Right cardiac atrium (tissue), 5 donors: ENCODE measurements at regions of chr5 and their contacts with region 1.

Region 1: DNA sequence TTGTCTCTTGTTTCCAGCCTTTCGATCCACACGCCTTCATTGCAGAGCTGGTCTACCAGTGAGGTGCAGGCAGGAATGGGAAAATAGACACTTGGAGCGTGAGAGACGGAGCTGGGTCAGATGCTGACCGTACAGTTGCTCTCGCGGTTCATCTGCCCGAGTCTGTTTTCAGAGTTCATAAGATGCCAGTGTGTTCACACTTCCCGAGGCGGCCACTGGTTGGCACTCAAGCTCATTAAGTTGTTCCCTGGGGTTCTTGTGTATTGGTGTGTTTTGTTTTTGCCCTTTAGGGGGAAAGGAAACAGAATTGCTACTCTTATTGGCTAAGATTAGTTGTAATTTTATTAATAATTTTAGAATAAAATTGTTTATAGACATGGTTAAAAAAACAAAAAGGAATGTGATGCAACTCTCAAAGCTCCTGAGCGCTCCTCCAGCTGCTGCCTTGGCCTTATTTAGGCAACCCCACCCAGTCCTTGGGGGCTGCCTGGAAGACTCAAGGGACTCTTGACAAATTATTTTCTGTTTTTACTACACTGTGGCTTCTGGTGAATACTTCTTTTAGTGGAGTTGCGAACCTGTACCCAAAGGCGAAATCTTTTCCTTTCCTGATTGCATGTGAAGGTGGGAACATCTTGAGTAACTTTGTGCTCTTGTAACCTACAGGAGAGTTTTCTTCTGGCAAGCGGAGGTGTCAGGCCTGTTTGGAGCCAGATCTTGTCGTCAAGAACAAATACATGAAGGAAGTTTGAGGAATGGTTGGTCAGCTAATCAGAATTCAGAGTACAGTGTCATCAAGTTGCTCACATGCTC is 146.1 kb downstream of the MAST4 start:
- DNase-seq: peak; percentile 44 to 81 (median 75)
- ATAC-seq: peak; percentile 40 to 54
- H3K4me3 ChIP-seq: no peak overlapping the region
- H3K27ac ChIP-seq: peak overlapping the region; percentile 22
- H3K4me1 ChIP-seq: peaks cover 10% of the 10 kb centered on the region
- H3K27me3 ChIP-seq: no peaks in the 10 kb centered on the region

Region 2: GRCh38 chr5:66595756-66596635 is 146.3 kb before region 1 on chr5 and contains the start of gene MAST4:
- intact Hi-C with region 1: loop called in 1 of 4 experiments (anchors 10 kb)
- DNase-seq: peak; percentile 92 to 97 (median 97)
- ATAC-seq: peak; percentile 98
- H3K4me3 ChIP-seq: peak within 1 kb of the TSS; percentile 70
- H3K27ac ChIP-seq: peak within 1 kb of the TSS; percentile 40
- H3K4me1 ChIP-seq: peaks cover 1% of the 10 kb centered on the region
- H3K27me3 ChIP-seq: no peaks in the 10 kb centered on the region
- total RNA-seq, gene MAST4: 46.8 to 71.5 (median 57.1) TPM